ENCODE measurements at regions of chr5 and their contacts with region 1.

Region 1: DNA sequence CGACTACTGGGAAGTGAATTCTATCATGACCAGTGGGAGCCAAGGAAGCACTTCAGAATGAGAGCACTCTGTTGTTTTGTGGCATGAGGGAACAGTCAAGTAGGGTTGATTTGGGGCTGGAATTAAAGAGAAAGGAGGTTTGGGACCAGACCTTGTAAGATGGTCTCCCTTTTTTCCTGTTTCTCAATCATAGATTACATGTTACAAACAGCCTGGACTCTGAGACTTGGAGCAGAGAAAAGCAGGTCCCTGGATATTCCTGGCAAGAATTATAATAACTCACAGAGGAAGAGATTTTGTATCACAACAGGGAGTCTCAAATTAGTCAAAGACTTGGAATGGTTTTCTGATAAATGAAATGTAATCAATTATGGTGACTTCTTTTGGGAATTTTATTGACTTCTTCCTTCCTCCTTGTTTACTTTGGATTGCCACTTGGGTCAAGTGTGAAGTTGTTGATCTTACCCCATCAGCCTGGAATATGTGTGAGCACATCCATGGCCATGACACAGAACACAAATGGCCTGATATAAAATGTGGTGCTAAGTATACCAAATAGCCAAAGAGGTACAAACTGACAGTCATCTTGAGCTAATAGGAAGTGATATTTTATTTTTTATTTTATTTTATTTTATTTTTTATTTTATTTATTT is 131.0 kb upstream of the OSMR start:
- DNase-seq: no peak
- H3K4me3 ChIP-seq: no peak overlapping the region
- H3K27ac ChIP-seq: no peak overlapping the region
- H3K4me1 ChIP-seq: no peaks in the 10 kb centered on the region
- H3K27me3 ChIP-seq: peaks cover 0 to 3% of the 10 kb centered on the region in 2 experiments
- CTCF ChIP-seq: no peak
- POLR2A ChIP-seq: no peak

Region 2: GRCh38 chr5:38672059-38672788 is 42.6 kb before region 1 on chr5:
- CTCF ChIA-PET with region 1: interaction called, 3 read pairs
- POLR2A ChIA-PET with region 1: no interaction called
- dilution Hi-C with region 1: no loop called
- intact Hi-C with region 1: loop called (anchors 1 kb)
- DNase-seq: no peak
- H3K4me3 ChIP-seq: no peak overlapping the region
- H3K27ac ChIP-seq: no peak overlapping the region
- H3K4me1 ChIP-seq: no peaks in the 10 kb centered on the region
- H3K27me3 ChIP-seq: peaks cover 0 to 3% of the 10 kb centered on the region in 2 experiments
- CTCF ChIP-seq: no peak
- POLR2A ChIP-seq: no peak

Measured in endothelial cell of umbilical vein (primary cell).